Prostate gland (tissue), 2 donors: ENCODE measurements at regions of chr19 and their contacts with region 1.

Region 1: DNA sequence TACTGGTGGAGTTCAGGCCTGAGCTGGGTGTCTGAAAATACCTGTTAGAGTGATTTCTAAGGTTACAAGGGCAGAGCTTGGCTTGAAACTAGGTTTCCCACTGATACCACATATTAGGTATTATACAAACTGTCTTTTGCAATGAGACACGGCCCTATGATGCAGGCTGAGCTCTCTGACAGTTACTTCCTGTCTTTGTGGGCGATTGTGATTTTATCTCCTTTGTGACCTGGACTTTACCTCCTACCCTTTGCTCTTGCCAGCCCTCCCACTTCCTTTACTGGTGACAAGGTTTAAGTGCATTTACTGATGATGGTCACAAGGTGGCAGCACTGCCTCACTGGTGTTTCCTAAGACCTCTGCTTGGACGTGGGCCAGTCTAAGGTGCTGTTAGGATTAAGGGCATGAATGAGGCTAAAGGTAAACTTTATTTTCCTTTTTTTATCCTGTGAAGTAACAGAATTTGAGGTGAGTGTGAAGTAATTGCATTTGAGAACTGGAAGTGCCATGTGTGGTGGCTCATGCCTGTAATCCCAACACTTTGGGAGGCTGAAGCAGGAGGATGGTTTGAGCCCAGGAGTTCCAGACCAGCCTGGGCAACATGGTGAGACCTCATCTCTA is 7.7 kb upstream of the CXCL17 start:
- DNase-seq: peak; percentile 95
- H3K4me3 ChIP-seq: no peak overlapping the region
- H3K27ac ChIP-seq: peak overlapping the region; percentile 58 to 71
- H3K4me1 ChIP-seq: no peaks in the 10 kb centered on the region
- H3K27me3 ChIP-seq: no peaks in the 10 kb centered on the region
- CTCF ChIP-seq: peak; percentile 80 to 97 (median 94)
- POLR2A ChIP-seq: peak; percentile 13

Region 2: DNA sequence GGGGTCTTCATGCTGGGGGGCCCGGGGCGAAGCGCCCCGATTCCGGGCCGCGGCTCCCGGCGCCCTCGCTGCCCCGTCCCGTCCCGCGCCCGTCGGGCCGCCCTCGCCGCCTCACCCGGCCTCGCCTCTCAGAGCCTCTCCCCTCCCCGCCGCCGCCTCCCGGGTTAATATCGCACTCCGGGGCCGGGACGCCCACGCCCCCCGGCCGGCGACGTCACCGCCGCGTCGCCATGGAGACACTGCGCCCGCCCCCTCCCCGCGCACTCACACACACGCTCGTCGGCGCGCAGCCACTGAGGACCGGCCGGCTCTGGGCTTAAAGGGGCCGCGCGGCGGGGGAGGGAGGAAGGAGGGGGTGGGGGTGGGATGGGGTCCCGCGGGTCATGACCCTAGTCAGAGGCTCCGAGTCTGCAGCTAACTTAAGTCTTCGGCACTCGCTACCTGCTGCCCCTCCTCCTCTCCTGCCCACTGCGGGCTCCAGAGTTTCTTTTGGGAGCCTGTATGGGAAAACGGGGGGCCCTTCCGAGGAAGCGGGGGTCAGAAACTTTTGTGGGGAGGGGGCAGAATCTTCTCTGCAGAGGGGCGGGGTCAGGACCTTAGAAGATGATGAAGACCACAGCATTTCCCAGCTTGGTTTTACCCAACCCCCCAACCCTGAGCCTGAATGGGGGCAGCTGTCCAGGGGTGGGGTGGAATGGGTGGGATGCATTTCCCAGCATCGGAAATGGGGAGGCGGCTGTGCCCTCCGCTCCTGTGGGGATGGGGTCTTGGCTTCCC is 195.2 kb before region 1 on chr19 and contains the start of gene ERF:
- intact Hi-C with region 1: no loop called
- DNase-seq: peak; percentile 91
- H3K4me3 ChIP-seq: peak within 1 kb of the TSS; percentile 98
- H3K27ac ChIP-seq: peak within 1 kb of the TSS; percentile 98
- H3K4me1 ChIP-seq: peaks cover 14% of the 10 kb centered on the region
- H3K27me3 ChIP-seq: no peaks in the 10 kb centered on the region
- CTCF ChIP-seq: peak in 2 of 4 experiments; percentile 26 to 39
- POLR2A ChIP-seq: peak; percentile 100
- total RNA-seq, gene ERF: 33.9 to 121 TPM

Region 3: DNA sequence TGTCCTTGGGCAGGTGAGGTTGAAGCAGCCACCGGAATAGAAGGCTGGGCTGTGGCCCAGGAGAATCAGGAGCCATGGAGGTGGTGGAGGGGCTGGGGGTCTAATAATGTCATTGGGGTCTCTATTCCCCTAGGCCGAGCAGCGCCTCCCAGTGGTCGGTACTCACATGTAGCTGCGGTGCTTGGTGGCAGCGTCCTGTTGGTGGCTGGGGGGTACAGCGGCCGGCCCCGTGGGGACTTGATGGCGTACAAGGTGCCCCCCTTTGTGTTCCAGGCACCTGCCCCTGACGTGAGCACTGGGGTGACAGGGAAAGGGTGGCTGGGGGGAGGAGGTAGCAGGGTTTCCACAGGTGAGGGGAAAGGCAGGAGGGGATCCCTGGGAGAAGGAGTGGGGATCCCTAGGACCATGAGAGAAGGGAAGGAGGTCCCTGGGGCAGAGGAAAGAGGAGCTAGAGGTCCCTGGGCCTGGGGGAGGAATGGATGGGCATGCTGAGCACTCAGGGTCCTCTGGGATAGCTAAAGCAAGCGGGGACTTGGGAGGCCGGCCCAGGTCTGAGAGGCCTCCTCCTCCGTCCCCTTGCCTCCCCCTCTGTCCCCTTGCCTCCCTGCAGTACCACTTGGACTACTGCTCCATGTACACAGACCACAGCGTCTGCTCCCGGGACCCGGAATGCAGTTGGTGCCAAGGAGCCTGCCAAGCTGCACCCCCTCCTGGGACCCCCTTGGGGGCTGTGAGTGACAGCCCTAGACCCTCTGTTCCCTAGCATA is 106.9 kb before region 1 on chr19:
- intact Hi-C with region 1: no loop called
- DNase-seq: no peak
- H3K4me3 ChIP-seq: no peak overlapping the region
- H3K27ac ChIP-seq: no peak overlapping the region
- H3K4me1 ChIP-seq: no peaks in the 10 kb centered on the region
- H3K27me3 ChIP-seq: no peaks in the 10 kb centered on the region
- CTCF ChIP-seq: no peak
- POLR2A ChIP-seq: no peak

Region 4: GRCh38 chr19:42529248-42529764 is 78.9 kb after region 1 on chr19:
- intact Hi-C with region 1: loop called (anchors 1 kb)
- DNase-seq: peak; percentile 65
- H3K4me3 ChIP-seq: peak overlapping the region in 1 of 2 donors; percentile 44
- H3K27ac ChIP-seq: peak overlapping the region; percentile 77 to 84
- H3K4me1 ChIP-seq: peaks cover 9% of the 10 kb centered on the region
- H3K27me3 ChIP-seq: no peaks in the 10 kb centered on the region
- CTCF ChIP-seq: peak; percentile 72 to 95 (median 94)
- POLR2A ChIP-seq: no peak